PC-9 (cell line): ENCODE measurements at regions of chr16 and their contacts with region 1.

Region 1: DNA sequence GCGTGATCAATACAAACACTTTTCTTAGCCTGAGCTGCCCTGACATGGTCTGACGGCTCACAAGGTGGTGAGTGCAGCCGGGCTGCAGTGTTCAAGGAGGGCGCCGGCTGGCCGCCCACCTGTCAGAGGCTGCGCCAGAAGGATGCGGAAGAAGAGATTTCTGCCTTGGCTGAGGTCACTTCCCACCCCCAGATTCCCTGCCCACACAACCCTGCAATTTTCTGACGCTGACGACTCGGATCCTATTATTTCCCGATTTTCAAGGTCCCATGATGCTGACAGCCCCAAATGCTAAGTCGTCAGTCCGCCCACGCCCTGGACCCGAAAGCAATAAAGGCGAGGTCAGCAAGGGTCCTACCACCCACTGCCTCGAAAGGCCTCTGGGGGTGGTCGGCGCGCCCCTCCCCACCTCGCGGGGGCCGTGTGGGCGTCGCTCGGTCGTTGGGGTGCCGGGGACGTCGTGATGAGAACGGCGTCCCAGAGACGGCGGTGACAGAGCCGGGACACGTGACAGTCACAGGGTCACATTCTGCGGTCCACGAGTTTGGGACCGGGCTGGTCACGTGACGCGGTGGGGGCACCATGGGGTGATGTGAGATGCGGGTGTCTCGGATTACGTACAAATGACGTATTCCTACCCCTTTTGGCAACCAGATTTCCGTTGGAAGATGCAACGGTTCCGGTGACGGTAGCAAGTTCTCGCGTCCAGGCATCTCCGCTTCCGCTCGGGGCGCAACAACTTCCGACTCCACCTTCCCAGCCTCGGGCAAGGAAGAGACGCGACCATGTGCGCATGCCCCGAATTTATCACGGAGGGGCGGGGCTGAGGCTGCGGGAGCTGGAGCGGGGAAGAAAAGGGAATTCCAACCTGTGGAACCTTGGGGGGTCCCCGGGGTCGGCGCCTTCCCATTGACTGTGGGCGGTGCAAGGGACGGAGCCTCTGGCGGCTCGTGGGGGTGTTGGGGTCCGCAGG is at the start of gene STX4:
- DNase-seq: peak; percentile 93 to 99
- H3K4me3 ChIP-seq: peak within 1 kb of the TSS; percentile 87
- H3K27ac ChIP-seq: peak within 1 kb of the TSS; percentile 62
- H3K4me1 ChIP-seq: peaks cover 12% of the 10 kb centered on the region
- H3K27me3 ChIP-seq: no peaks in the 10 kb centered on the region
- CTCF ChIP-seq: no peak
- total RNA-seq, gene STX4: 85.8 and 100 TPM in 2 replicates

Region 2: GRCh38 chr16:30997000-30997886 is 35.8 kb before region 1 on chr16:
- CTCF ChIA-PET with region 1: no interaction called
- POLR2A ChIA-PET with region 1: interaction called, 3 read pairs
- intact Hi-C with region 1: loop called (anchors 1 kb)
- DNase-seq: peak; percentile 50 to 84
- H3K4me3 ChIP-seq: peak overlapping the region; percentile 67
- H3K27ac ChIP-seq: peak overlapping the region; percentile 80
- H3K4me1 ChIP-seq: peaks cover 24% of the 10 kb centered on the region
- H3K27me3 ChIP-seq: no peaks in the 10 kb centered on the region
- CTCF ChIP-seq: no peak

Region 3: DNA sequence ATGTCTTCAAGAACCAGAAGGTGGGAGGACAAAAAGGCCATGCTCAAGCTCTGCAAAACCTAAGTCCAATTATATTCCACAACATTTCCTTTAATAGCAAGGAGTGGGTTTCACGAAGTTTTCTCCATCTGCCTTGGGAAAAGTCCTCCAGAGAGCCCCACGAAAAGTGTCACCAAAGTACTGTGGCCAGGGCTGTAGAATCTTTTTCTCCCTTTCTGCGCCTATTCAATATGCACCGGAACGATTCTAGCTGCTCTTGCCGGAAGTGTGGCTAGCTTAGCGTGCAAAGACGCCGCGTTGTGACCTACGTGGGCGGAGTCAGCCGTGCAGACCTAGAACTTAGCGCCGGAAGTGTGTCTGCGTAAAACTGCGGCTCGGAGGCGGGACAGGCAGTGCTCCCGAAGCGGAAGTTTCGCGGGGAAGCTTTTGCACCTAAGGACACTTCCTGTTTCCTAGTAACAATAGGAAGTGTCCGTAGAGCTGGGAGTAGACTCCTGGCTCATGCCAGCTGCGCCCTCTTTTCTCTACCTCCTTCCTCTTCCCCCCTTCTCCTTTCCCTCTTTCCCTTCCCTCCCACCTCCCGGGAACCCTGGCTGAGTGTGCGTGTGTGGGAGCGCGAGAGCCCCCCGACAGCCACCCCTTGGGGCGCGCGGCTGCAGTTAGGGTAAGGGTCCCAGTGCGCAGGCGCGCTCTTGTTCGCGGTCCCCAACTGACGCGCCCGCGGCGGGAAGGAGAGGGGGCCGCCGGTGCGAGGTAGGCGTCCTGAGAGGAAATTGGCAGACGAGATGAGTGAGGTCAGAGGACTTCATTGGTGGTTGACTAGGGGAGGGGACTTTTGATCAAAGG is 41.2 kb after region 1 on chr16 and contains the starts of genes ZNF646 and ZNF668:
- CTCF ChIA-PET with region 1: no interaction called
- POLR2A ChIA-PET with region 1: no interaction called
- intact Hi-C with region 1: loop called (anchors 1 kb)
- DNase-seq: peak; percentile 98 to 99
- H3K4me3 ChIP-seq: peak within 1 kb of the TSS; percentile 89
- H3K27ac ChIP-seq: peak within 1 kb of the TSS; percentile 62
- H3K4me1 ChIP-seq: peaks cover 20% of the 10 kb centered on the region
- H3K27me3 ChIP-seq: no peaks in the 10 kb centered on the region
- CTCF ChIP-seq: no peak
- total RNA-seq, gene ZNF646: 25.4 and 30.7 TPM in 2 replicates
- total RNA-seq, gene ZNF668: 13.2 and 17.4 TPM in 2 replicates

Region 4: GRCh38 chr16:31094424-31095120 is 61.5 kb after region 1 on chr16 and contains the start of gene VKORC1:
- CTCF ChIA-PET with region 1: interaction called, 4 read pairs
- POLR2A ChIA-PET with region 1: no interaction called
- intact Hi-C with region 1: loop called (anchors 2 kb)
- DNase-seq: peak; percentile 97 to 99
- H3K4me3 ChIP-seq: peak within 1 kb of the TSS; percentile 71
- H3K27ac ChIP-seq: peak within 1 kb of the TSS; percentile 35
- H3K4me1 ChIP-seq: 0 out of 2 replicates have a peak, but pooled peaks cover 3% of the 10 kb centered on the region
- H3K27me3 ChIP-seq: no peaks in the 10 kb centered on the region
- CTCF ChIP-seq: no peak
- total RNA-seq, gene VKORC1: 46.0 and 59.9 TPM in 2 replicates